ENCODE measurements at regions of chr4 and their contacts with region 1.

Region 1: GRCh38 chr4:3715061-3715854 is 50.9 kb upstream of the ADRA2C start:
- DNase-seq: peak; percentile 49

Region 2: GRCh38 chr4:3657902-3658529 is 57.2 kb before region 1 on chr4:
- intact Hi-C with region 1: loop called in 1 of 2 experiments (anchors 2 kb)
- DNase-seq: peak; percentile 94

Region 3: DNA sequence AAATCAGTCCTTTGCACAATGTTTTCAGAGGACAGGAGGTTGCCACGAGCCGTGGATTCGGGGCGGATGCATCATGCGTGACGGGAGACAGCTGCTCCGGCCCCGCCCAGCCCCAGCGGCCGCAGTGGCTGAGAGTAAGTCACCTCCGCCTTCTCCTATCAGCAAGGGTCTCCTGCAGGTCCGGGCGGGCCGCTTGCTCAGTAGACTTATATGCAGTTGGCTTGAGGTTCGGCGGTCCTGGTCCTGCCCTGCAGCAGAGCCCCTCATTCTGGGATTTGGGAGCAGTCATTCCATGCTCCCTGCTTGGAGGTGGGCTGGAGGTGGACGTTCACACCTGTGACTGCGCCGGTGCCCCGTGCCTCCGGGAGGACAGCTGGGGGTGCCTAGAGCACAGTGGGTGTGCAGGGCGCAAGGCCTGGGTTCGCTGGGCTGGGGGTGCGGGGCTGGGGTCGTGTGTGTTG is 35.4 kb before region 1 on chr4:
- intact Hi-C with region 1: no loop called
- DNase-seq: peak; percentile 80